Prostate gland (tissue), 2 donors: ENCODE measurements at regions of chr12 and their contacts with region 1.

Region 1: GRCh38 chr12:28227251-28227650 is 37.0 kb downstream of the CCDC91 start:
- DNase-seq: no peak
- H3K4me3 ChIP-seq: no peak overlapping the region
- H3K27ac ChIP-seq: no peak overlapping the region
- H3K4me1 ChIP-seq: no peaks in the 10 kb centered on the region
- H3K27me3 ChIP-seq: no peaks in the 10 kb centered on the region
- CTCF ChIP-seq: no peak
- POLR2A ChIP-seq: no peak

Region 2: DNA sequence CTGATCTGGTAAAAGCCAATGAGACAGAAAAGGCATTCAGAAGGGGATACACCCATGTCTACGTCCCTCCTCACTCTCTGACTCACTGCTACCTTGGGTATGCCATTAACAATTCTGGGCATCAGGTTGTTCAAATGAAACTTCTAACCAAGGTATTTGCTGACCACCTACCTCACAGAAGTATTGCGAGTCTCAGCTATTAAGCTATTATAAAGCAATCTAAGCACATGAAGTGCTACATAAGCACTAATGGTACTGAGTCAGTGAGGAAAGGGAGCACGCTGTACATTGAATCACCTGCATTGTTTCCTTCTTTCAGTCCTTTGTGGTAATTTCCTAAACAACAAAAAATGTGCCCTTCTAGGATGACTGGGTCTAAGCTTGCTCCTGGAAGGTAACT is 99.8 kb before region 1 on chr12:
- intact Hi-C with region 1: no loop called
- DNase-seq: no peak
- H3K4me3 ChIP-seq: no peak overlapping the region
- H3K27ac ChIP-seq: no peak overlapping the region
- H3K4me1 ChIP-seq: no peaks in the 10 kb centered on the region
- H3K27me3 ChIP-seq: no peaks in the 10 kb centered on the region
- CTCF ChIP-seq: no peak
- POLR2A ChIP-seq: no peak

Region 3: DNA sequence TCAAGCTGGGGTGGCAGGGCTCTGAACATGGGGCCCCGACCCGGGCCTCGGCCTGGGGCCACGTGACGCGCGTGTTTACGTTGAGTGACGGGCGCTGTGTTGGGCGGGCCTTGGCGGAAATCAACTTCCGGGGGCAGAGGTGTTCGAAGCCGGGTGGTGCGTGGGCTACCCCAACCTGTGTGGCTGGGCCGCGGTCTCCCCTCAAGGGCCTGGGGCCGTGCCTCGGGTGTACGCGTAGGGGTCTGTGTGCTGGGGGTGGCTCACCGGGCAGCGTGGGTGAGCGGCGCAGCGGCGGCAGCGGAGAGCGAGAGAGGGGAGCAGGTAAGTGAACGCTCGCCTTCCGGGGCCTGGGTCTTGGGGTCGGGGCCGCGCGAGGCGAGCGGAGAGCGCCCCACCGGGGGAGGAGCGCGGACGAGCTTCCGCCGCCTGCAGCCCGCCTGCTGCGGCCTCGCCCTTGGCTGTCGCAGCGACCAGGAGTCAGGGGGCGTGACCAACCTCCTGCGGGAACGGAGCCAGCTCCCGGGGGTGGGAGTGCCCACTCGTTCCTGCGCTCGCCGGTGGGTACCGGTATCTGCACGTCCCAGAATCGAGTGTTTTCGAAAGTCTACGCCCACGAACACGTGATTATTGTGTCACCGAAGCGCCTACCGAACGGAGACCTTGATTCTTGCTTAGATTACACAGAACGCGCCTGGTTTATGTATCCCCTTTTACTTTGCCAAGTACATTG is 36.8 kb before region 1 on chr12 and contains the start of gene CCDC91:
- intact Hi-C with region 1: loop called (anchors 5 kb)
- DNase-seq: peak; percentile 80
- H3K4me3 ChIP-seq: peak within 1 kb of the TSS; percentile 82 to 87
- H3K27ac ChIP-seq: peak within 1 kb of the TSS; percentile 95 to 96
- H3K4me1 ChIP-seq: no peaks in the 10 kb centered on the region
- H3K27me3 ChIP-seq: no peaks in the 10 kb centered on the region
- CTCF ChIP-seq: peak in 2 of 4 experiments; percentile 13 to 22
- POLR2A ChIP-seq: peak; percentile 42
- total RNA-seq, gene CCDC91: 25.3 to 42.4 TPM